Caco-2 (cell line): ENCODE measurements at regions of chr1 and their contacts with region 1.

Region 1: DNA sequence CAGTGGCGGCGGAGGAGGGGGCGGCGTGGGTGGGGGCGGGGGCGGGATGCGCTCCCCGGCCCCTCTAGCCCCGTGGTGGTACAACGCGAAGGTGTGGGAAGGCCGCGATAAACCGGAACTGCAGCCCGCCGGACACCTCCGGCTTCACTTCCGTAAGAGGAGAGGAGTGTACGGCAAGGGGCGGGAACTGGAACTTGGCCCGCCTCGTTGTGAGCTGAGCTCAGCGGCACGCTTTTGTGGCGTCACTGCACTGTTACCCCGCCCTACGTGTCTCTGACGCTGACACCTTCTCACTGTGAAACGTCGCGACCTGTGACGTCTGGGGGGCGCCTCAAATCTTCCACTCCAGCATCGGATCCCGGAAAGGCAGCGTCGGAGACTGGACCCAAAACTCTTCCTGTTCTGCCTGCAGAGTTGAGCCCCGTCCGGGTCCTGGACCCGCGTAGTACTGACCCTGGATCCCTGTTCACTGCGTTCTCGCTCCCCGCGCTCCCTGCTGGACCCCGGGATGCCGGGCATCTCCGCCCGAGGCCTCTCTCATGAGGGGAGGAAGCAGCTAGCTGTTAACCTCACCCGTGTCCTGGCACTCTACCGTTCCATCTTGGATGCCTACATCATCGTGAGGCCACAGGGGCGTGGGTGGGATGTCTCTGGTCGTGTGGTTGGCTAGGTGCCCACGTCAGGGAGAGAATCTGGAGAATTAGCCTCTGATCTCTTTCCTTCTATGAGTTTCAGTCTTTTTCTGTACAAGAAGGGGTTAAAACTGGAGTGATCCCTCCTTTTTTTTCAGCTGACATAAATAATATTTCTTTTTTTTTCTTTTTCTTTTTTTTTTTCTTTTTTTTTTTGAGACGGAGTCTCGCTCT is at the start of gene ISG20L2:
- DNase-seq: peak; percentile 95 to 96
- H3K4me3 ChIP-seq: peak within 1 kb of the TSS; percentile 90
- H3K4me3 Mint-ChIP-seq: no peak within 1 kb of the TSS
- H3K27ac Mint-ChIP-seq: peak within 1 kb of the TSS; percentile 96
- H3K4me1 ChIP-seq: peaks cover 13% of the 10 kb centered on the region; the same call in 1 of the 2 replicates
- H3K4me1 Mint-ChIP-seq: peaks cover 6% of the 10 kb centered on the region
- H3K27me3 ChIP-seq: no peaks in the 10 kb centered on the region
- H3K27me3 Mint-ChIP-seq: no peaks in the 10 kb centered on the region
- CTCF ChIP-seq: no peak
- total RNA-seq, gene ISG20L2: 42.3 and 44.1 TPM in 2 replicates

Region 2: DNA sequence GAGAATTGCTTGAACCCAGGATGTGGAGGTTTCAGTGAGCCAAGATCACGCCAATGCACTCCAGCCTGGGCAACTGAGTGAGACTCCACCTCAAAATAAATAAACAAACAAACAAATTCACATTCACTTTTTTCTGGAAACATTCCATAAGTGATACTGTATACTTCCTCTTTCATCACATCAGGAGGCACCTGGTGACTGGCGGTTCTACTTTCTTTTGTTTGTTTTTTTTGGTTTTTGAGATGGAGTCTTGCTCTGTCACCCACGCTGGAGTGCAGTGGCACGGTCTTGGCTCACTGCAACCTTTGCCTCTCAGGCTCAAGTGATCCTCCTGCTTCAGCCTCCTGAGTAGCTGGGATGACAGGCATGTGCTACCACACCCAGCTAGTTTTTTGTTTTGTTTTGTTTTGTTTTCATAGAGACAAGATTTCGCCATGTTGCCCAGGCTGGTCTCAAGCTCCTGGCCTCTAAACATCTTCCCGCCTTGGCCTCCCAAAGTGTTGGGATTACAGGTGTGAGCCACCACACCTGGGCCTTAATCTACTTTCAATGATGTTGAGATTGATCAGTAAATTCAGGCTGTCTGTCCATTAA is 98.9 kb before region 1 on chr1:
- CTCF ChIA-PET with region 1: no interaction called
- POLR2A ChIA-PET with region 1: no interaction called
- intact Hi-C with region 1: no loop called
- DNase-seq: no peak
- H3K4me3 ChIP-seq: no peak overlapping the region
- H3K4me3 Mint-ChIP-seq: no peak overlapping the region
- H3K27ac Mint-ChIP-seq: no peak overlapping the region
- H3K4me1 ChIP-seq: peaks cover 7% of the 10 kb centered on the region
- H3K4me1 Mint-ChIP-seq: peaks cover 10% of the 10 kb centered on the region
- H3K27me3 ChIP-seq: peaks cover 1% of the 10 kb centered on the region; the same call in 1 of the 2 replicates
- H3K27me3 Mint-ChIP-seq: peaks cover 13% of the 10 kb centered on the region
- CTCF ChIP-seq: no peak

Region 3: DNA sequence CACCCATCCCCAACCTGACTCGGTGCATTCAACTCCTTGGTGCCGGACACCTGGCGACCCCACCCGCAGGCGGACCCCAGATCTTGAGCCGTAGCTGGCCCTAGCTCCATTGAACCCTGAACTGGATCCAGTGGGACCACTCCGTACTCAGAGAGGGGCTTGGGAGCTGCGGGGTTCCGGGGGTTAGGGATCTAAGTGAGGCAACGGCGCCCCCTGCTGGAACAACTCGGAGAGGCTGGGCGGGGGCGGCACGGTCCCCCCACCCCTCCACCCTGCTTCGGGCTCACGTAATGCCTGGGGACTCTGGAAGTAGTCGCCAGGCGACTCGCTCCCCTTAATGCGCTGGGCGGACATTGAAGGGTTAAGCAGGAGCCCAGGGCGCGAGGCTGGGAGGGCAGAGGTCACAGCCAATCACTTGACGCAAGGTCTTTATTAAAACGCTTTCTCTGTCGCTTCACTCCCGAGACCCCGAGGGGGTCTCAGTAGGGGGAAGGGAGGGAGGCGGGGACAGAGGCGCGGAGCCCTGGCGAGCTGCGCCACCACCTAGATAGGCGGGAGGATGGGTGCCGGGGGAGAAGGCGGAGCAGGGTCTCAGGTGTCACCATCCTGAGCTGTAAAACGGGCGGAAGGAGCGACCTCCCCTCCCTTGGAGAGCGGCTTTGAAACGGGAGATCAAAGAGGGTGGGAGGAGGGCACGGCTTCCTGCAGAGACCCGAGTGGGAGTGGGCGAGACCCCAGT is 22.7 kb before region 1 on chr1:
- CTCF ChIA-PET with region 1: interaction called, 58 read pairs
- POLR2A ChIA-PET with region 1: interaction called, 16 read pairs
- intact Hi-C with region 1: loop called (anchors 1 kb)
- DNase-seq: peak; percentile 79 to 83
- H3K4me3 ChIP-seq: peak overlapping the region; percentile 53
- H3K4me3 Mint-ChIP-seq: peak overlapping the region; percentile 90
- H3K27ac Mint-ChIP-seq: peak overlapping the region; percentile 86
- H3K4me1 ChIP-seq: peaks cover 7% of the 10 kb centered on the region
- H3K4me1 Mint-ChIP-seq: peaks cover 16% of the 10 kb centered on the region
- H3K27me3 ChIP-seq: no peaks in the 10 kb centered on the region
- H3K27me3 Mint-ChIP-seq: no peaks in the 10 kb centered on the region
- CTCF ChIP-seq: peak; percentile 73 to 87

Region 4: DNA sequence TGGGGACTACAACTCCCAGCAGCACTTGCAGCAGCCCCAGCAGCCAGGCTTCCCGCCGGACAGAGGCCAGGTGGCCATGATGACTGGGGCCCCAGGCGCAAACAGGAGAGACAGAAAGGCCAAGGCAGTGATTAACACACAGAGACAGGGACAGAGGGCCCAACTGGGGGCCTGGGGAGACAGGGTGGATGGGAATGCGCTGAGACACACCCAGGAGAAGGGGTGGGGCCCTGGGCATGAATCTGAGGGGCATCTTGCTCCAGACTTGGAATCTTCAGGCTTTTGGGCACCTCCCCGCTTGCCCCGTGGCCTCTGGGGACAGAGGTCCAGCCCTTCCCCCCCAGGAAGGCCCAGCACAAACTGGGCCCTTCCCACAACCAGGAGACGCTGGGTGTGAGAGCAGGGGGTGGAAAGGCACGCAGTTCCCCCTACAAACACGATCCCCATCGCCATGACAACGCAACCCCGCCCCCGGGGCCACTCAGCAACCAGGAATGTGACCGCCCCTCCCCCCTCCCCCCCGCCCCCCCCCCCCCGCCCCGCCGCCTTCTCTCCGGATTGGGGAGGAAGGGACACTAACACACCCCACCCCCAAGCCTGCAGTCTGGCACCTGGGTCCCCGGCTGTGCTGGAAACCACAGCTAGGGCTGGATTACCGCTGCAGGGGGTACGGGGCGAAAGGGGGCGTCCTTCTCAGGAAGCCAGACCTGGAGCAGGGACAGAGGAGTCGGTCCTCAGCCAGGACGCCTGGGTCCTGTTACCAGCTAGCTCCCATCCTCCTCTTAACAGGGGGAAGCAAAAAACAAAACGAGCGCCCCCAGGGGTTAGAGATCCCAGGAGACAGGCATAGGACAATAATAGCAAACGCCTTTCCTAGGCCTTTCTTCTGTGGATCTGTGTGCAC is 18.1 kb after region 1 on chr1:
- CTCF ChIA-PET with region 1: interaction called, 32 read pairs
- POLR2A ChIA-PET with region 1: interaction called, 108 read pairs
- intact Hi-C with region 1: loop called (anchors 1 kb)
- DNase-seq: peak; percentile 98
- H3K4me3 ChIP-seq: peak overlapping the region; percentile 47
- H3K4me3 Mint-ChIP-seq: peak overlapping the region; percentile 79
- H3K27ac Mint-ChIP-seq: peak overlapping the region; percentile 100
- H3K4me1 ChIP-seq: peaks cover 38% of the 10 kb centered on the region
- H3K4me1 Mint-ChIP-seq: peaks cover 33% of the 10 kb centered on the region
- H3K27me3 ChIP-seq: no peaks in the 10 kb centered on the region
- H3K27me3 Mint-ChIP-seq: no peaks in the 10 kb centered on the region
- CTCF ChIP-seq: peak; percentile 14 to 35

Region 5: DNA sequence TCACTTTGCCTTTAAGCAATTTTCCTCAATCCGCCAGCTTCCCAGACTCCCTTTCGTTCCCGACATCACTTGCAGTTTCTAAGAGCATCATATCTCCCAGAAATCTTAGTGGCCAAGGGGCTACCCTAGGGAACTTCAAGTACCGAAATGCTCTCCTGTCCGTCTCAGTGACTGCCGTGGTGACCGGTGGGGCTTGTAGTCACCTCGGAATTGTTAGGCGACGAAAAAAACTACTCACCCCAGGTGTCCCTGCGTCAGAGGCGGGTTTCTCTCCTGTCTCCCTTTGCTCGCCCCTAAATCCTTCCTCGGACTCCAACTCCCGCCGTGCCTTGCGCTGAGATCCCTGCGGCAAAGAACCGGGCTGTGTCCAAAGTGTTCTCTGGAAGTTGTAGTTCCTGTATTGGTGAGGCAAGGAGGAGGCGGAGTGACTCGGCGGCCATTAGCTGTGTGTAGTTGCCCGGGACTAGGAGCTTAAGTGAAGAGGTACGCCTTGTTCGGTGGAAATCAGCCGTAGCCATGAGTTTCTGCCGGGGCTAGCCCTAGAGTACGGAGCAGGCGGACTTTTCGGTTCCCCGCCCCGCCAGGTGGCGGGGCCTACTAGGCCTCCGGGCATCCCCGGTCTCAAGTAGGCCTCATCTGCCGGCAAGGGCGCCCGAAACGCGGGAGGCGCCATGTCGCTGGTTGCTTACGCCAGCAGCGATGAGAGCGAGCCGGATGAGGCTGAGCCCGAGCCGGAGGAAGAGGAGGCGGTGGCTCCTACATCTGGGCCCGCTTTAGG is 38.5 kb after region 1 on chr1 and contains the start of gene PRCC:
- CTCF ChIA-PET with region 1: interaction called, 7 read pairs
- POLR2A ChIA-PET with region 1: interaction called, 27 read pairs
- intact Hi-C with region 1: loop called (anchors 1 kb)
- DNase-seq: peak; percentile 98 to 99
- H3K4me3 ChIP-seq: peak within 1 kb of the TSS; percentile 93
- H3K4me3 Mint-ChIP-seq: no peak within 1 kb of the TSS
- H3K27ac Mint-ChIP-seq: no peak within 1 kb of the TSS
- H3K4me1 ChIP-seq: peaks cover 8% of the 10 kb centered on the region; the same call in 1 of the 2 replicates
- H3K4me1 Mint-ChIP-seq: peaks cover 39% of the 10 kb centered on the region
- H3K27me3 ChIP-seq: no peaks in the 10 kb centered on the region
- H3K27me3 Mint-ChIP-seq: no peaks in the 10 kb centered on the region
- CTCF ChIP-seq: no peak
- total RNA-seq, gene PRCC: 94.4 and 101 TPM in 2 replicates

Region 6: GRCh38 chr1:156823210-156823790 is 94.5 kb after region 1 on chr1:
- CTCF ChIA-PET with region 1: no interaction called
- POLR2A ChIA-PET with region 1: no interaction called
- intact Hi-C with region 1: no loop called
- DNase-seq: no peak
- H3K4me3 ChIP-seq: no peak overlapping the region
- H3K4me3 Mint-ChIP-seq: no peak overlapping the region
- H3K27ac Mint-ChIP-seq: no peak overlapping the region
- H3K4me1 ChIP-seq: no peaks in the 10 kb centered on the region
- H3K4me1 Mint-ChIP-seq: no peaks in the 10 kb centered on the region
- H3K27me3 ChIP-seq: no peaks in the 10 kb centered on the region; the same call in 1 of the 2 replicates
- H3K27me3 Mint-ChIP-seq: peaks cover 7% of the 10 kb centered on the region
- CTCF ChIP-seq: no peak

Region 7: GRCh38 chr1:156860113-156860627 is 131.3 kb after region 1 on chr1:
- CTCF ChIA-PET with region 1: interaction called, 27 read pairs
- POLR2A ChIA-PET with region 1: interaction called, 6 read pairs
- intact Hi-C with region 1: loop called (anchors 1 kb)
- DNase-seq: peak in 1 of 2 experiments; percentile 60
- H3K4me3 ChIP-seq: peak overlapping the region; percentile 27
- H3K4me3 Mint-ChIP-seq: peak overlapping the region; percentile 74
- H3K27ac Mint-ChIP-seq: no peak overlapping the region
- H3K4me1 ChIP-seq: peaks cover 33% of the 10 kb centered on the region
- H3K4me1 Mint-ChIP-seq: peaks cover 25% of the 10 kb centered on the region
- H3K27me3 ChIP-seq: peaks cover 7% of the 10 kb centered on the region
- H3K27me3 Mint-ChIP-seq: peaks cover 11% of the 10 kb centered on the region
- CTCF ChIP-seq: peak; percentile 88 to 90